ENCODE measurements at regions of chr20 and their contacts with region 1.

Region 1: GRCh38 chr20:63739130-63740069 is at the start of gene SLC2A4RG:
- DNase-seq: peak; percentile 49 to 86 (median 69)
- ATAC-seq: peak; percentile 62
- H3K4me3 ChIP-seq: peak within 1 kb of the TSS; percentile 99
- H3K4me3 Mint-ChIP-seq: peak within 1 kb of the TSS; percentile 33 to 92 (median 80)
- H3K27ac ChIP-seq: peak within 1 kb of the TSS; percentile 71
- H3K27ac Mint-ChIP-seq: peak within 1 kb of the TSS in 1 of 9 donors; percentile 38
- H3K4me1 ChIP-seq: peaks cover 21 to 29% of the 10 kb centered on the region in 2 donors
- H3K4me1 Mint-ChIP-seq: peaks cover 7 to 20% (median 16%) of the 10 kb centered on the region in 7 donors
- H3K27me3 ChIP-seq: no peaks in the 10 kb centered on the region
- H3K27me3 Mint-ChIP-seq: no peaks in the 10 kb centered on the region
- total RNA-seq, gene SLC2A4RG: 88.7 to 136 (median 111) TPM

Region 2: GRCh38 chr20:63698739-63699465 is 40.5 kb before region 1 on chr20:
- CTCF ChIA-PET with region 1: no interaction called
- POLR2A ChIA-PET with region 1: interaction called, 19 read pairs
- intact Hi-C with region 1: no loop called
- DNase-seq: peak in 1 of 9 donors; percentile 65
- ATAC-seq: no peak
- H3K4me3 ChIP-seq: no peak overlapping the region
- H3K4me3 Mint-ChIP-seq: no peak overlapping the region
- H3K27ac ChIP-seq: no peak overlapping the region
- H3K27ac Mint-ChIP-seq: peak overlapping the region in 1 of 9 donors; percentile 46
- H3K4me1 ChIP-seq: peaks cover 12 to 20% of the 10 kb centered on the region in 2 donors
- H3K4me1 Mint-ChIP-seq: peaks cover 5 to 15% (median 6%) of the 10 kb centered on the region in 7 donors
- H3K27me3 ChIP-seq: no peaks in the 10 kb centered on the region
- H3K27me3 Mint-ChIP-seq: no peaks in the 10 kb centered on the region

Region 3: DNA sequence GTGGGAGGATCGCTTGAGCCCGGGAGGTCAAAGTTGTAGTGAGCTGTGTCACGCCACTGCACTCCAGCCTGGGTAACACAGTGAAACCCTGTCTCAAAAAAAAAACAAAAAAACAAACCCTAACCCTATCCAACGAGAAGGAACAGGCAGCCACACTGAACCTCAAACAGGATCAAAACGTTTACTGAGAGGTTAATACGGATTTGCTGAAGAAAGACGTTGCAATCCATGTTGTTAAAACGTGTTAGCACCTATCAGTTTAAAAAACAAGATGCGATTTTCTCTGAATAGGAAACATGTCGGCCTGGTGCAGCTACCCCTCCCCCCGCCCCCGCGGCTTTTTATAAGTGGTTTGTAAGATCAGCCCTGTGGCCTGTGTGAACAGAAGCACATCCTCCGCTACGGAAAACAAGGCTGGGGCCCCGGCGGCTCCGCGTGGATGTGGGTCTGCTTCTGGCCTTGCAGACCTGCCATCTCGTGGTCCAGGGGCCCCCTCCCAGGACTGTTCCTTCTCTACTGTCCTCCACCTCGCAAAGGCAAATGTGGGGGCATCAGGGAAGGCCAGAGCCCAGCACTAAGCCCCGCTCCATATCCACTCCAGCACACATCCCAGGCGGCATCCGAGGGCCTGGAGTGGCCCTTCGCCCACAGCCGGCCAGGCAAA is 11.5 kb after region 1 on chr20:
- CTCF ChIA-PET with region 1: interaction called, 4 read pairs
- POLR2A ChIA-PET with region 1: interaction called, 37 read pairs
- intact Hi-C with region 1: loop called (anchors 1 kb)
- DNase-seq: peak in 8 of 9 donors; percentile 54 to 74 (median 66)
- ATAC-seq: peak; percentile 84
- H3K4me3 ChIP-seq: peak overlapping the region; percentile 50
- H3K4me3 Mint-ChIP-seq: peak overlapping the region; percentile 69 to 83 (median 75)
- H3K27ac ChIP-seq: peak overlapping the region; percentile 71
- H3K27ac Mint-ChIP-seq: peak overlapping the region; percentile 78 to 96 (median 92)
- H3K4me1 ChIP-seq: peaks cover 13 to 23% of the 10 kb centered on the region in 2 donors
- H3K4me1 Mint-ChIP-seq: peaks cover 12 to 50% (median 28%) of the 10 kb centered on the region in 7 donors
- H3K27me3 ChIP-seq: no peaks in the 10 kb centered on the region
- H3K27me3 Mint-ChIP-seq: peaks cover 0 to 3% (median 0%) of the 10 kb centered on the region in 5 donors

Measured in naive thymus-derived CD4-positive, alpha-beta T cell (primary cell).